Activated T-helper 1 cell treated with anti-CD3 and anti-CD28 coated beads, Interleukin-12 subunit alpha, Interleukin-12 subunit beta, Interleukin-2, Interleukin-4 antibody, amounts not matched to agents 30 ng/mL and 10 ng/mL and 1 ng/mL, durations not matched to agents 14 hours and 24 hours and 36 hours (primary cell): ENCODE measurements at regions of chr11 and their contacts with region 1.

Region 1: DNA sequence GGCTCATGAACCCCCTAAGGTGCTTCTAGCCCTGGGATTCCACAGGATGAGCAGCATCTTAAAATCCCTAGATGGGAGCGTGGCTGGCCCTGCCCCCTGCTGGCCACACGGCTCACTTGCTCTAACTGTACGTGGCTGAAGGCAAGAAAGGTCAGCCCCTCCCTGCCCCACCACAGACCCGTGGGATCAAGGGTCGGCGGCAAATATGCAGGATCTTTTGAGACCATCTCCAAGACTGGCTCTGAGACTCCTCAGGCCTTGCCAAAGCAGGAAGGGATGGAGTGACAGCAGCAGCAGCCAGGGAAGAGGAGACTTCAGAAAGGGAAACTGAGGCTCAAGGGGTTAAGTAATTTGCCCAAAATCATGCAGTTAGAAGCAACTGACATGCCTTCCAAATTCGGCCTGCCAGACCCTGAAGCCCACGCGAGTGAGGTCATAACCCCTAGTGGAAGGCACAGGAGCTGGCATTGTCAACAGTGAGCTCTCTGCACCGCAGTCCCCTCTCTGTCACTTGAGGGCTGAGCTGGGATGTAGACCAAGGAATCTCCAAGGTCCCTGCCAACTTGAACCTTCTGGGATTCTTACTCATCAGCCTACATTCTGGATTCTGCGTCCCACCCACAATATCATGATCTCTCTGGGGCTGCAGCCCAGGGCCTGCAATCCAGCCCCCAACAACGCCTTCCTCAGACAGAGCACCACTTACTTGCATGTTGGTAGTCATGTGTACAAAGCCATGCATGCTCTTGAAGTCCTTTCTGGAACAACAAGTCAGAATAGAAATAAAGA is 31.4 kb downstream of the CREB3L1 start:
- DNase-seq: peak; percentile 43
- H3K4me3 Mint-ChIP-seq: no peak overlapping the region
- H3K27ac Mint-ChIP-seq: no peak overlapping the region
- H3K4me1 Mint-ChIP-seq: peaks cover 19% of the 10 kb centered on the region
- H3K27me3 Mint-ChIP-seq: peaks cover 2% of the 10 kb centered on the region

Region 2: DNA sequence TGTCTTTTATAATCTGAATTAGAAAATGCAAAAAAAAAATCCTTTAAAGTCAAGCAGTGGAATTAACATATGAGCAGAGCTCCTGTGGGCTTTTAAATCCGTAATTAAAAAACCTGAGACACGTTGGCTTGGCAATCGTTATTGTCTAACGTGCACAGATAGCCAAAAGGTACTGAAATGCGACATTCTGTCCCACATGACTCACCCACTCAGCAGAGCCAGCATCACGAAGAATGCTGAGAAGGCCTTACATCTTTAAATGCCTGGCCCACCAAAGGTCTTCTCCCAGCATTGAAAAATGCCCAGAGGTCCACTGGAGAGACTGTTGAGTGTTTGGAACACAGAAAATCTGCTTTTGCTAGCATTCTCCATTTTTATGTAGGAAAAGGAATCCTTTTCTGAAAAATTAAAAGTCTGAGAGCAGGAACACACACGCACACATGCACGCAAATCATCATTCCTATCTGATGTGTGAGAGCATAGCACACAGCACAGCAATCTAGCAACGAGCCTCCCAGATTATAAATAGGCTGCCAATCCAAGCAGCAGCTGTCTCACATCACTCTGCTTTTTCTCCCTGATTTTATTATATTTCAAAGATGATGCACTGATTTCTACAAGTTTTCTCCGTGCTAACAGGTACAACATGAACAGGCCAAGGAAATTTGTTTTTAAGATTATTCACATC is 282.1 kb before region 1 on chr11:
- intact Hi-C with region 1: no loop called
- DNase-seq: no peak
- H3K4me3 Mint-ChIP-seq: no peak overlapping the region
- H3K27ac Mint-ChIP-seq: no peak overlapping the region
- H3K4me1 Mint-ChIP-seq: no peaks in the 10 kb centered on the region
- H3K27me3 Mint-ChIP-seq: peaks cover 1% of the 10 kb centered on the region

Region 3: GRCh38 chr11:46127150-46127638 is 181.6 kb before region 1 on chr11:
- intact Hi-C with region 1: loop called (anchors 1 kb)
- DNase-seq: peak; percentile 68
- H3K4me3 Mint-ChIP-seq: no peak overlapping the region
- H3K27ac Mint-ChIP-seq: peak overlapping the region; percentile 50
- H3K4me1 Mint-ChIP-seq: peaks cover 21% of the 10 kb centered on the region
- H3K27me3 Mint-ChIP-seq: no peaks in the 10 kb centered on the region